ENCODE measurements at regions of chr2 and their contacts with region 1.

Region 1: GRCh38 chr2:42944779-42945415 is 152.5 kb upstream of the HAAO start:
- DNase-seq: peak; percentile 44 to 60
- ATAC-seq: peak; percentile 48 to 79; a peak in 4 of 6 replicates
- H3K4me3 ChIP-seq: no peak overlapping the region
- H3K27ac ChIP-seq: no peak overlapping the region
- H3K4me1 ChIP-seq: no peaks in the 10 kb centered on the region
- CTCF ChIP-seq: no peak
- EP300 ChIP-seq: no peak
- POLR2A ChIP-seq: no peak
- RAD21 ChIP-seq: no peak

Region 2: DNA sequence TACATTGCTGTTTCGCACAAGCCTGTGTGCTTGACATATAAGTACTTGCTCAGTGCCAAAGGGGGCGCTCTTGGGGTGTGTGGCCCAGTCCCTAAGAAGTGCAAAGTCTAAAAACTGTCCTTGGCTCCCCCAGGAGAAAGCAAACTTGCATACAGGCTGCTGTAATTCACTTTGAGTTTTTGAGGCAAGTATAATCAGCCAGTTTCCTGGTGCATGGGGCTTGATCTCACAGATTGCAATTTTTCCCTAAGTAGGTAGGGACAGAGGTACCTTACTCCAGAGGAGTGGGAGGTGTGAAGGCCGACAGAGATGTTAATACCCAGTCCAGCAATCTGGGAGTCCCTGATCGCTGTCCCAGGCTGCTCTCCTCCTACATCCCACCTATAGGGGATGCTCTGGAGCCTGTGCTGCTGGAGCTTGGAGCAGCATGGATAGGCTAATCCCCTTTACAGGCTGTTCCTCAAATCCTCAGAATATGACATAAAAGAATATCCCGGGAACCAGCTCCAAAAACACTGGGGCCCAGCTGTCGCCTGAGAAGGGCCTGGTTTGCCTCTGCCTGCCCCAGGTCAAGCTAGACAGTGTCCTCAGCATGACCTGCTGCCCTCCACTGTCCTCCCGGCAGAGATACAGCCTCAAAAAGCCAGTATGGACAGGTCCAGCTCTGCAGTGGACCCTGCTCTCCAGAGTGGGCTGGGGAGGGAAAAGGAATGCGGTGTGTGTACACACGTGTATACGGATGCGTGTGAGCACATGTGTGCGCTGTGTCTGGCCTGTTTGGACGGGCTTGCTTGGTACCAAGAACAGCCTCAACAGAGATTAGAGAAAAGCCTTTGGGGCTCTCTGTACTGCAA is 16.0 kb before region 1 on chr2:
- CTCF ChIA-PET with region 1: interaction called, 92 read pairs
- POLR2A ChIA-PET with region 1: no interaction called
- DNase-seq: peak; percentile 63
- ATAC-seq: peak; percentile 48 to 79; a peak in 4 of 6 replicates
- H3K4me3 ChIP-seq: no peak overlapping the region
- H3K27ac ChIP-seq: peak overlapping the region in 1 of 2 experiments; percentile 54; a peak in 1 of 6 replicates
- H3K4me1 ChIP-seq: peaks cover 37% of the 10 kb centered on the region
- CTCF ChIP-seq: peak; percentile 40; the same call in 2 of the 3 replicates
- EP300 ChIP-seq: no peak
- POLR2A ChIP-seq: no peak
- RAD21 ChIP-seq: peak in 1 of 2 experiments; percentile 29; a peak in 2 of 5 replicates

Region 3: GRCh38 chr2:43000242-43001054 is 55.6 kb after region 1 on chr2:
- CTCF ChIA-PET with region 1: interaction called, 11 read pairs
- POLR2A ChIA-PET with region 1: no interaction called
- DNase-seq: no peak
- ATAC-seq: peak; percentile 15 to 30; a peak in 2 of 6 replicates
- H3K4me3 ChIP-seq: no peak overlapping the region
- H3K27ac ChIP-seq: peak overlapping the region in 1 of 2 experiments; percentile 60; a peak in 3 of 6 replicates
- H3K4me1 ChIP-seq: peaks cover 18% of the 10 kb centered on the region
- CTCF ChIP-seq: no peak
- EP300 ChIP-seq: no peak
- POLR2A ChIP-seq: no peak
- RAD21 ChIP-seq: no peak

Region 4: DNA sequence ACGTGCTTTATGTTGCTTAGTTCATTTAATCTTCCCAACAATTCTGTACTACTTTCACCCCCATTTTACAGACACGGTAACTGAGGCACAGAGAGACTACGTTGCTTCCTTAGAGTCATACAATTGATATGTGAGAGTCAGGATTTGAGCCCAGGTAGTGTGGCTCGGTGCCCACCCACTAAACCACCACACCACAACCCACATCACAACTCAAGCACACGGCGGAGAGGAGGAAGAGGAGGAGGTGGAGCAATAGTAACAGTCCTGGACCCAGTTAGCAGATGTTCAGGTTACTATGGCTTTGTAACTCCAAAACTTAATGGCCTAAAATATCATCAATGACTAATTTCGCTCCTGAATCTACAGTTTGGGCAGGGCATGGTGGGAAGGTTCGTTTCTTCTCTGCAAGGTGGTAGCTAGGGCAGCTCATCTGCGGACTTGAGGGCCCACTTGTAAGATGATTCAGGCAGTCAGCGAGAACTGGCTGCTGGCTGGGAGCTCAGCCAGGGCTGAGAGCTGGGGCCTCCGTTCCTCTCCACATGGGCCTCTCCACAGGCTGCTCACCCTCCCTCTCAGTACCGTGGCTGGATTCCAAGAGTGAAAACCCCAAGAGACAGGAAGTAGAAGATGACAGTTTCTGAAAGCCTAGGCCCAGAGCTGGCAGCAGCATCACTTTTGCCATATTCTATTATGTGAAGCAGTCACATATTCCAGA is 114.4 kb after region 1 on chr2:
- CTCF ChIA-PET with region 1: no interaction called
- POLR2A ChIA-PET with region 1: no interaction called
- DNase-seq: no peak
- ATAC-seq: no peak
- H3K4me3 ChIP-seq: no peak overlapping the region
- H3K27ac ChIP-seq: peak overlapping the region in 1 of 2 experiments; percentile 4; a peak in 1 of 6 replicates
- H3K4me1 ChIP-seq: peaks cover 18% of the 10 kb centered on the region
- CTCF ChIP-seq: no peak
- EP300 ChIP-seq: no peak
- POLR2A ChIP-seq: no peak
- RAD21 ChIP-seq: no peak

Region 5: DNA sequence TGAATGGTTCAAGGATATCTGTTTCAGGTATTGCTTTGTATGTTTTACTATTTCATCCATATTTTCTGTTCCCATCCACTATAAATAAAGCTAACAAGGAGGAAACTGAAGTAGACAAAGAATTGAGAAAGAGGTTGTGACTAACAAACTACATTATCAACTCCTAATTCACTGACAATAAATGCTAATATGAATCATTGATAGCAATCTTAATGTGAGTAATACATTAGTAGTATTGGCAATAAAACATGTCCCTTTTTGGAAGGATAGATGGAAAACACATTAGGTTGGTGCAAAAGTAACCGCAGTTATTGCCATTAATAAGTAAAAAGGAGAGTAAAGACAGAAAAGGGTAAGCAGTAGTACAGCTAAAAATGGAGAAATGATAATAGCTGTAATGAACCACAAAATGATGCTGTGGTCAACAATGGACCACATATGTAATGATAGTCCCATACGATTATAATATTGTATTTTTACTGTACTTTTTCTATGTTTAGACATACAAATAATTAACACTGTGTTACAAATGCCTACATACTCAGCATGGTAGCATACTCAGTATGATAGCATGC is 546.3 kb after region 1 on chr2:
- CTCF ChIA-PET with region 1: interaction called, 69 read pairs
- POLR2A ChIA-PET with region 1: no interaction called
- DNase-seq: no peak
- ATAC-seq: no peak
- H3K4me3 ChIP-seq: no peak overlapping the region
- H3K27ac ChIP-seq: no peak overlapping the region
- H3K4me1 ChIP-seq: no peaks in the 10 kb centered on the region
- CTCF ChIP-seq: no peak
- EP300 ChIP-seq: no peak
- POLR2A ChIP-seq: no peak
- RAD21 ChIP-seq: no peak

Region 6: DNA sequence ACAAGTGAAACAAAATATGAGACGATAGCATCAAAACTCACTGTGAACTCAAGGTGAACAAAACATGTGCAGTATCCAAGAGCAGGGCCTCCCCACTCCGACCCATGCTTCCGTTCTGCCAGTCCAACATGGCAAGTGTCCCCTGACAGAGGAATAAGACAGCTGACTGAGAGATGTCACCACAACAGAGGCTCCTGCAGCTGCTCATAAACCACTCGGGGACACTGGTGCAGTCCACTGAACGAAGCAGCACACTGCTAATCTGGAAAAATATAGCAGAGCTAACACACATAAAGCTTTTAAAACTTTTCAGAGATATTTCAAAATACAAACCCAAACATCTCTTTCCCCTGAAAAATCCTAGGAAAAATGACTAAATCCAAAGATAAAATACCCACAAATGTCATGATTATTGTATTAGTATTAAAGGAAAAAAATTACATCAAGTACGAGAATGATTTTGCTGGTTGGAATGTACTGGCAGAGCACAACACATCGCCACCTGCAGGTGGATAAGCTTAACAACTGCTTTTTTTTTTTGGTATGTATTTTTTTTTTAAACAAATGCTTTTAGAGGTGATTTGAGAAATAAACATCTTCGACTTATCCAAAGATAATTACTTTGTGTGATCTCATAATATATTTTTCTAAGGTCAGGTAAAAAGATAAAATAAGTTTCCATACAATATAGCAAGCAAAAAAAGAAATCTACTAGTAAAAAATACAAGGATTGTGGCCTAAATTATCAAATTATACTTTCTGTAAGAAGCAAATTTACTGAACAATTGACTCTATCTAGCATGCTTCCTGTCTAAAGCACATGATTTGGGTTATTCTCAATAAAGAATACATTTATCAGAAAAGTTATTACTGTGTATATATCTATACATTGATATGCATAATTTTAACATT is 632.3 kb after region 1 on chr2:
- CTCF ChIA-PET with region 1: interaction called, 10 read pairs
- POLR2A ChIA-PET with region 1: no interaction called
- DNase-seq: peak; percentile 46 to 77
- ATAC-seq: peak; percentile 59 to 67; a peak in 5 of 6 replicates
- H3K4me3 ChIP-seq: no peak overlapping the region
- H3K27ac ChIP-seq: 0 out of 6 replicates have a peak overlapping the region, but pooled peaks of 1 of the 2 experiments have one; percentile 14
- H3K4me1 ChIP-seq: no peaks in the 10 kb centered on the region
- CTCF ChIP-seq: peak; percentile 93
- EP300 ChIP-seq: no peak
- POLR2A ChIP-seq: no peak
- RAD21 ChIP-seq: peak; percentile 37 to 47; a peak in 4 of 5 replicates